Breast epithelium (tissue), 4 donors: ENCODE measurements at regions of chr7 and their contacts with region 1.

Region 1: GRCh38 chr7:158247758-158248487 is 339.7 kb downstream of the PTPRN2 start:
- DNase-seq: no peak
- H3K4me3 ChIP-seq: no peak overlapping the region
- H3K27ac ChIP-seq: no peak overlapping the region
- H3K4me1 ChIP-seq: no peaks in the 10 kb centered on the region
- H3K27me3 ChIP-seq: no peaks in the 10 kb centered on the region
- CTCF ChIP-seq: no peak
- POLR2A ChIP-seq: no peak

Region 2: DNA sequence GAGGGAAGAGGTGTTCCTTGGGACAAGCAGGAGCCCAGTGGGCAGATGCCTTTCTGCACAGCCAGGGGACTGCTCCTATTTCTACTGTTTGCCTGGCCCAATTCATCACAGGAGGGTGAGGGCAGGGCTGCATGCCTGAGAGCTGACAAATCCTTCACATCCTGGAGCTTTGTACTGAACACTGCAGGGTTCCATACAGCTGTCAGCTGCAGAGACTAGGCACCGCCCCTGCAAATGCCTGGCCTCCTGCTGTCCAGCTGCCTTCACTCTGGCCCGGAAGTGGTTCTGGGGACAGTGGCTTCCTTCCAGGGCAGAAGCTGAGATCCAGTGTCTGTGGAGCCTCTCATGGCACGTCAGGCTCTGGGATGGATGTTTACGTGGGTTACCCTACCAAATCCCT is 440.4 kb before region 1 on chr7:
- intact Hi-C with region 1: no loop called
- DNase-seq: no peak
- H3K4me3 ChIP-seq: no peak overlapping the region
- H3K27ac ChIP-seq: no peak overlapping the region
- H3K4me1 ChIP-seq: no peaks in the 10 kb centered on the region
- H3K27me3 ChIP-seq: no peaks in the 10 kb centered on the region
- CTCF ChIP-seq: no peak
- POLR2A ChIP-seq: no peak

Region 3: DNA sequence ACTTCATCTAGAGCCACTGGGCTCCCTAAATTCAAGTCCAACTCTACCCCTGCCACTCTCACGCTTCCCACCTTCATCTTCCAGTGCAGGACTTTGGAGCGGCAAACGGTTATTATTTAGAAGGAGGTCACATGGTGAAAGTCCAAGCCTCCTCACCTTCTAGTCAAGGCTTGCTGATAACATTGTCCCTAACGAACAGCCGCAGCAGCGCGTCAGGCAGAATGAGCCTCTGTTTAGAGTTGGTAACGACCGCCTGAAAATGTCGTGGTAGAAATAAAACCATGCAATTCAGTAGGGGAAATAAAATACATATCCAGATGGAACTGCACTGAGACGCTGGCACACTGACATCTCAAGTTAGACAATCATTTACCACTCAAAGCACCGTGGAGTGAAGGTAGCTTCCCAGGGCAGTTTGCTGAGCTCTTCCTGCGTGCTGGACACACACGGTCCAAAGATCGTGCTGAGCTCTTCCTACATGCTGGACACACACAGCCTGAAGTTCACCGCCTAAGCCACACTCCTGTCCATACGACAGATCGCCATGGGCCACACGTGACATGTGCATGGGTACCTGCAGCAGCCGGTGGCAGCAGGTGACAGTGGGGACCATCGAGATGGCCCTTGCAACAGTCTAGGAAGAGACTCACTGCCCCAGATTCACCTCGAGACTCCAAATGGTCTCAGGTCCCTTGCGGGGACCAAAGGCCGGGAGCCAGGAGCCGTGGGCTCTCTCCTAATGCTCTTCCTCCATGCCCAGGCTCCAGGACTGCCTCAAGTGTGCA is 16.2 kb after region 1 on chr7:
- intact Hi-C with region 1: loop called (anchors 1 kb)
- DNase-seq: no peak
- H3K4me3 ChIP-seq: no peak overlapping the region
- H3K27ac ChIP-seq: no peak overlapping the region
- H3K4me1 ChIP-seq: no peaks in the 10 kb centered on the region
- H3K27me3 ChIP-seq: no peaks in the 10 kb centered on the region
- CTCF ChIP-seq: no peak
- POLR2A ChIP-seq: no peak